CD8-positive, alpha-beta T cell (primary cell): ENCODE measurements at regions of chr9 and their contacts with region 1.

Region 1: GRCh38 chr9:111631071-111631971 is at the start of gene DNAJC25:
- DNase-seq: peak; percentile 92 to 99 (median 96)
- ATAC-seq: peak; percentile 94
- H3K4me3 ChIP-seq: peak within 1 kb of the TSS; percentile 50 to 69
- H3K4me3 Mint-ChIP-seq: peak within 1 kb of the TSS; percentile 98
- H3K27ac ChIP-seq: peak within 1 kb of the TSS; percentile 78 to 80
- H3K27ac Mint-ChIP-seq: peak within 1 kb of the TSS; percentile 92
- H3K4me1 ChIP-seq: peaks cover 18% of the 10 kb centered on the region
- H3K4me1 Mint-ChIP-seq: peaks cover 47% of the 10 kb centered on the region
- H3K27me3 ChIP-seq: no peaks in the 10 kb centered on the region
- H3K27me3 Mint-ChIP-seq: no peaks in the 10 kb centered on the region
- CTCF ChIP-seq: no peak
- total RNA-seq, gene DNAJC25: 5.8 to 7.2 TPM

Region 2: GRCh38 chr9:111525056-111525977 is 106.0 kb before region 1 on chr9 and contains the start of gene ZNF483:
- CTCF ChIA-PET with region 1: no interaction called
- POLR2A ChIA-PET with region 1: interaction called, 10 read pairs
- intact Hi-C with region 1: loop called (anchors 2 to 5 kb)
- DNase-seq: peak; percentile 55 to 92 (median 76)
- ATAC-seq: peak; percentile 92
- H3K4me3 ChIP-seq: peak within 1 kb of the TSS; percentile 77
- H3K4me3 Mint-ChIP-seq: peak within 1 kb of the TSS; percentile 98
- H3K27ac ChIP-seq: peak within 1 kb of the TSS; percentile 70 to 88
- H3K27ac Mint-ChIP-seq: peak within 1 kb of the TSS; percentile 100
- H3K4me1 ChIP-seq: peaks cover 6% of the 10 kb centered on the region
- H3K4me1 Mint-ChIP-seq: peaks cover 28% of the 10 kb centered on the region
- H3K27me3 ChIP-seq: peaks cover 0 to 3% of the 10 kb centered on the region in 2 experiments
- H3K27me3 Mint-ChIP-seq: peaks cover 2% of the 10 kb centered on the region
- CTCF ChIP-seq: no peak
- total RNA-seq, gene ZNF483: 19.6 to 21.3 TPM

Region 3: GRCh38 chr9:111582888-111583287 is 48.4 kb before region 1 on chr9:
- CTCF ChIA-PET with region 1: no interaction called
- POLR2A ChIA-PET with region 1: no interaction called
- intact Hi-C with region 1: no loop called
- DNase-seq: no peak
- ATAC-seq: no peak
- H3K4me3 ChIP-seq: no peak overlapping the region
- H3K4me3 Mint-ChIP-seq: no peak overlapping the region
- H3K27ac ChIP-seq: no peak overlapping the region
- H3K27ac Mint-ChIP-seq: no peak overlapping the region
- H3K4me1 ChIP-seq: no peaks in the 10 kb centered on the region
- H3K4me1 Mint-ChIP-seq: no peaks in the 10 kb centered on the region
- H3K27me3 ChIP-seq: peaks cover 0 to 1% of the 10 kb centered on the region in 2 experiments
- H3K27me3 Mint-ChIP-seq: peaks cover 1% of the 10 kb centered on the region
- CTCF ChIP-seq: no peak

Region 4: GRCh38 chr9:112174218-112174964 is 543.1 kb after region 1 on chr9:
- CTCF ChIA-PET with region 1: no interaction called
- POLR2A ChIA-PET with region 1: no interaction called
- intact Hi-C with region 1: loop called in 1 of 2 experiments (anchors 10 kb)
- DNase-seq: peak; percentile 45 to 87 (median 74)
- ATAC-seq: peak; percentile 70
- H3K4me3 ChIP-seq: peak overlapping the region; percentile 43 to 73
- H3K4me3 Mint-ChIP-seq: peak overlapping the region; percentile 91
- H3K27ac ChIP-seq: peak overlapping the region; percentile 35 to 56
- H3K27ac Mint-ChIP-seq: peak overlapping the region; percentile 87
- H3K4me1 ChIP-seq: peaks cover 46% of the 10 kb centered on the region
- H3K4me1 Mint-ChIP-seq: peaks cover 73% of the 10 kb centered on the region
- H3K27me3 ChIP-seq: no peaks in the 10 kb centered on the region
- H3K27me3 Mint-ChIP-seq: no peaks in the 10 kb centered on the region
- CTCF ChIP-seq: no peak

Region 5: GRCh38 chr9:112493393-112494137 is 862.2 kb after region 1 on chr9:
- CTCF ChIA-PET with region 1: no interaction called
- POLR2A ChIA-PET with region 1: no interaction called
- intact Hi-C with region 1: loop called (anchors 2 to 10 kb)
- DNase-seq: no peak
- ATAC-seq: no peak
- H3K4me3 ChIP-seq: no peak overlapping the region
- H3K4me3 Mint-ChIP-seq: no peak overlapping the region
- H3K27ac ChIP-seq: no peak overlapping the region
- H3K27ac Mint-ChIP-seq: no peak overlapping the region
- H3K4me1 ChIP-seq: no peaks in the 10 kb centered on the region
- H3K4me1 Mint-ChIP-seq: peaks cover 20% of the 10 kb centered on the region
- H3K27me3 ChIP-seq: no peaks in the 10 kb centered on the region
- H3K27me3 Mint-ChIP-seq: no peaks in the 10 kb centered on the region
- CTCF ChIP-seq: no peak

Region 6: DNA sequence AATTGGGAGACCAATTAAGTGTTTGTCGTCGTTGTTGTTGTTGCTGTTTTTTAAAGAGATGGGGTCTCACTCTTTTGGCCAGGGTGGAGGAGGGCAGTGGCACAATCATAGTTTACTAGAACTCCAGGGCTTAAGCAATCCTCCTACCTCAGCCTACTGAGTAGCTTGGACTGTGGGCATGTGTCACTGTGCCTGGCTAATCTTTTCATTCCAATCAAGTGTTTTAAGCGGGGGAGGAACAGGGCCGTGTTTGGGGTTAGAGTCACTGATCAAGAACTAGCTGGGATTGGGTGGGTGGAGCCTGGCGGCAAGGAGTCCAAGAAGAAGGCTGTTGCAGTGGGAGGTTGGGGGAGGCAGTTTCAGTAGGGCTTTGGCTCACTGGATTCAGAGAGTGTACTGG is 1133.0 kb after region 1 on chr9:
- CTCF ChIA-PET with region 1: no interaction called
- POLR2A ChIA-PET with region 1: no interaction called
- intact Hi-C with region 1: no loop called
- DNase-seq: no peak
- ATAC-seq: no peak
- H3K4me3 ChIP-seq: no peak overlapping the region
- H3K4me3 Mint-ChIP-seq: no peak overlapping the region
- H3K27ac ChIP-seq: no peak overlapping the region
- H3K27ac Mint-ChIP-seq: no peak overlapping the region
- H3K4me1 ChIP-seq: peaks cover 7% of the 10 kb centered on the region
- H3K4me1 Mint-ChIP-seq: peaks cover 39% of the 10 kb centered on the region
- H3K27me3 ChIP-seq: no peaks in the 10 kb centered on the region
- H3K27me3 Mint-ChIP-seq: no peaks in the 10 kb centered on the region
- CTCF ChIP-seq: no peak

Region 7: GRCh38 chr9:113221003-113221799 is 1589.9 kb after region 1 on chr9 and contains the starts of genes FKBP15 and SLC31A1:
- CTCF ChIA-PET with region 1: no interaction called
- POLR2A ChIA-PET with region 1: no interaction called
- intact Hi-C with region 1: loop called in 1 of 2 experiments (anchors 10 kb)
- DNase-seq: peak; percentile 91 to 99 (median 95)
- ATAC-seq: peak; percentile 99
- H3K4me3 ChIP-seq: peak within 1 kb of the TSS; percentile 84 to 94
- H3K4me3 Mint-ChIP-seq: peak within 1 kb of the TSS; percentile 95
- H3K27ac ChIP-seq: peak within 1 kb of the TSS; percentile 71 to 90
- H3K27ac Mint-ChIP-seq: peak within 1 kb of the TSS; percentile 94
- H3K4me1 ChIP-seq: peaks cover 22% of the 10 kb centered on the region
- H3K4me1 Mint-ChIP-seq: peaks cover 57% of the 10 kb centered on the region
- H3K27me3 ChIP-seq: no peaks in the 10 kb centered on the region
- H3K27me3 Mint-ChIP-seq: no peaks in the 10 kb centered on the region
- CTCF ChIP-seq: no peak
- total RNA-seq, gene FKBP15: 8.7 to 8.9 TPM
- total RNA-seq, gene SLC31A1: 8.7 to 9.6 TPM